ENCODE measurements at regions of chr9 and their contacts with region 1.

Region 1: GRCh38 chr9:121634329-121635261 is 16.8 kb upstream of the DAB2IP start:
- DNase-seq: no peak
- ATAC-seq: peak; percentile 61

Region 2: DNA sequence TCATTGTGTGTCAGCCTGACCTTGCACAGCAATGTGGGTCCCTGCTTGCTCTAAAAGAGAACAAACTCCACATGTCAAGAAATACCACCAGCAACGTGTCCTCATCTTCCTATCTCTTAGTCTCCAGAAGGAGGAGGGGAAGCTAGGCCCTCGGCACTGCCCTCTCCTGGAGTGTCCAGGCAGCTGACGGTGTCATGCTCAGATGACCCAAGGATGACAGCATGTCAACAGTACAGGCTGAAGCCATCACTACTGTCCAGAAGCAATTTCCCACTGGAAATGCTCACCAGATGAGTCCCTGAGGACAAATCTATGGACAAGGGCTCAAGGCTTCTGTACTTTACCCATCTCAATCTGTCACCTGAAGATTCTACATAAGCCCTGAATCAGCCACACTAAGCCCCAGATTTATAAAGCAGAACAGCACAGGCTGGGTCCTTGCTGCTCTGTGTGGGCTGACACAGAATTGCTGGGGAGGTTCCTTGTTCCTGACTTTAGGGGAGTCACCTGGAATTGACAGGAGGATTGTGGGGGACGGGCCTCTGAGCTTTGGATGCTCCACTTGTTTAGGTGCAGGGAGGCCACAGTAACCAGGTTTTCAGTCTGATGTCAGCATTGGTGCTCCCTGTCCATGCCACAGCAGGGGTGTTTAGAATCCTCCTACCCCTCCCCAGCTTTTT is 227.0 kb after region 1 on chr9:
- intact Hi-C with region 1: loop called (anchors 5 kb)
- DNase-seq: no peak
- ATAC-seq: peak; percentile 73

Measured in Right ventricle myocardium inferior (tissue), 1 donor.